ENCODE measurements at regions of chr3 and their contacts with region 1.

Region 1: GRCh38 chr3:73624821-73625665 is at the start of gene PDZRN3:
- DNase-seq: peak in 1 of 2 donors; percentile 79
- H3K4me3 ChIP-seq: peak within 1 kb of the TSS; percentile 82 to 91
- H3K27ac ChIP-seq: peak within 1 kb of the TSS; percentile 91 to 93
- H3K4me1 ChIP-seq: peaks cover 0 to 12% of the 10 kb centered on the region in 2 donors
- H3K27me3 ChIP-seq: no peaks in the 10 kb centered on the region
- CTCF ChIP-seq: no peak
- total RNA-seq, gene PDZRN3: 71.9 TPM

Region 2: DNA sequence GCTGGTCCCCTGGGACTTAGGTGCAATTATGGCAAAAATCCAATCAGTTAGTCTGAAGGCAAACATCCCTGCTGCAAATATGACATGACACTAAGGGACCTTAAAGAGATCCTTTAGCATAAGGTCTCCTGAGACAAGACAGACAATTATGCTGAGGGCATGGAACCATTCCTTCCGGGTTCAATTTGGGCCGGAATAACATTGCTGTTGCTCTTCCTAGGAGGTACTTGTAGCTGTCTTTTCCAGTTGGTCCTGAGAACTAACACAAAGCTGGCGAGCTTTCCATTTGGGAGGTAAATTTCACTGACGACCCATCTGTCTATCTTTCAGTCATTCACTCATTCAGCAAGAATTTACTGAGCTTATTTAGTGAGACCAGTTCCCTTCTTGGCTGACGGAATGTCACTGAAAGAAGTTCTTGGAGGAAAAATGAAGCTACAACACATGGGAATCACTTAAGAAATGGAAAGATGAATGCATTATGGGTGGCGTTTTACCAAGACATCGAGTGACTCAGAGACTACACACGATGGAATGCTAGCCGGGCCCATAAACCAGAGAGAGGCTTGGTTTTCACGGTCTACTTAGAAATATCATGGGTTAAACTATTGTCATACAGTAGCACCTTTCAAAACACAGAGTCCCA is 215.8 kb before region 1 on chr3:
- intact Hi-C with region 1: no loop called
- DNase-seq: no peak
- H3K4me3 ChIP-seq: no peak overlapping the region
- H3K27ac ChIP-seq: peak overlapping the region in 1 of 2 donors; percentile 15
- H3K4me1 ChIP-seq: peaks cover 6 to 26% of the 10 kb centered on the region in 2 donors
- H3K27me3 ChIP-seq: no peaks in the 10 kb centered on the region
- CTCF ChIP-seq: no peak

Region 3: DNA sequence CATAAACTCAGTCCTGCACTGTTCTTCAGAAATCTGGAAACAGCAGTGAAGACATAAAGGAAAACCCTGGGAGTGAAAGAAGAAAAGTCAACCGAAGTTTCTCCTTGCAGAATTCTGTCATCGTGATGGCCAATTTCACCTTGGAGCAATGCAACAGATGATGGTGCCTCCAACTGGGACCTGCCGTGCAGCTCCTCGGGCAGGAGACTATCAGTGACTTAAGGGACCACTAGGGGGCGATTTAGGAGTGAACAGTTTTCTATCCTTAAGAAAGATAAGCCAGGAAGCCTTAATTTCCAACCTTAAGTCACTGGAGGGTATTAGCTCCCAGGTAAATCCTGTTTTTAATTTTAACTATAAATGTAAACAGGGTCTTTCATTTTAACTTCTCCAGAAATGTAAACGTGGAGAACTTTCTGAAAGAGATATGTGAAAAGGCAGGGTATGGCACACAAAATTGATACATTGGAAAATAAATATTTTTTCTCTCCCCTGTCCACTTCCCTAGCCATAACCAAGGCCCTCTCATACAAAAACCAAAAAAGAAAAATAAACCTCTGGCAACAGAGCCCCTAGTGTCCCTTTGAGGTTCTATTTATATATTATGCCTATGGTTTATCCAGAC is 116.6 kb before region 1 on chr3:
- intact Hi-C with region 1: loop called (anchors 2 kb)
- DNase-seq: no peak
- H3K4me3 ChIP-seq: peak overlapping the region in 1 of 2 donors; percentile 13
- H3K27ac ChIP-seq: peak overlapping the region; percentile 73 to 89
- H3K4me1 ChIP-seq: peaks cover 8 to 62% of the 10 kb centered on the region in 2 donors
- H3K27me3 ChIP-seq: no peaks in the 10 kb centered on the region
- CTCF ChIP-seq: peak; percentile 56 to 73 (median 71)

Region 4: GRCh38 chr3:73580343-73580742 is 44.7 kb before region 1 on chr3:
- intact Hi-C with region 1: no loop called
- DNase-seq: no peak
- H3K4me3 ChIP-seq: no peak overlapping the region
- H3K27ac ChIP-seq: no peak overlapping the region
- H3K4me1 ChIP-seq: peaks cover 0 to 15% of the 10 kb centered on the region in 2 donors
- H3K27me3 ChIP-seq: no peaks in the 10 kb centered on the region
- CTCF ChIP-seq: no peak

Region 5: DNA sequence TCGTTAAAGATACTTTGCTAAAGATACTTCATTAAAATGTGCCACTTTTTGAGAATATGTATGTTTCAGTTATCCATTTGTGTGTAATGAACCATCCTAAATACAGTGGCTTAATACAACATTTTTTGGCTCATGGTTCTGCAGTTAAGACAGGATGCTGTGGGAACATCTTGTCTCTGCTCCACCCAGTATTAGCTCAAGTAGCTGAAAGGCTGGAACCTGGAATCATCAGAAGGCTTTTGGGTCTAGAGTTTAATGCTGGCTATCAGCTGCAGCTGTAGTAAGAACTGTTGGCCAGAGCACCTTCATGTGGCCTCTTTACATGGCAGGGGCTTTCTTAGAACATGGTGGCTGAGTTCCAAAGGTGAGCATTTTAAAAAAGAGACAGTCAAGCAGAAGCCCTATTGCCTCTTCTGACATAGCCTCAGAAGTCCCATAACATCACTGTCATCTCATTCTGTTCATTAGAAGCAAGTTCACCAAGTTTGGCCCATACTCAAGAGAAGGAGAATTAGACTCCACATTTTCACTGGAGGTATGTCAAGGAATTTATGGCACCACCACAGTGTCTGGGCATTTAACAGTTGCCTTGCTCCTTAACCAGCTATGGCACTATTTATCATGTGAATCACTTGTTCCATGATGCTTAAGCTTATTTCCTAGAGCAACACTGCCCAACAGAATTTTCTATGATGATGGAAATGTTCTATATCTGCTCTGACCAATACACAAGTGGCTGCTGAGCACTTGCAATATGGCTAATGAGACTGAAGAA is 70.1 kb after region 1 on chr3:
- intact Hi-C with region 1: loop called (anchors 5 kb)
- DNase-seq: no peak
- H3K4me3 ChIP-seq: no peak overlapping the region
- H3K27ac ChIP-seq: peak overlapping the region in 1 of 2 donors; percentile 38
- H3K4me1 ChIP-seq: peaks cover 0 to 7% of the 10 kb centered on the region in 2 donors
- H3K27me3 ChIP-seq: no peaks in the 10 kb centered on the region
- CTCF ChIP-seq: no peak

Region 6: DNA sequence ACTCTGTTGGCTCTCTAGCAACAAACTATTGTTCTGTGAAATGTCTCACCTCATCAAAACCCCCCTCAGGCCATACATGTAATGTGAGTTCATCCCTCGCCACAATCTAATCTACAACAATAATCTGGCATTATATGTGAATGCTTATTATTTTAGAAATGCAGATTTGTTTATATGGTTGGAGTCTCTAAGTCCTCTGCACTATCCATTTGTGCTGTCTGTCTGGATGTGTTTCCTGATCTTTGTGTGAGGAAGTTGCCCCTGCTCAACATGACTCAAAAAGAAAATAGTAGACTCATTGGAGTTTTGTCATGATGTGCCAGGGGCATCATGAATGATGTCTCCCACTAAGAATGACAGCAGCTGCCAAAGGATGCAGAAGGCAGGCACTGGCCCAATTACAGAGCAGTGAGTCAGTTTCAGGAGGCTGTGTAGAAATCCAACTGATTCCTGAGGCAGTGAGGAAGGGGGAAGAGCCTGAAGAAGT is 161.3 kb after region 1 on chr3:
- intact Hi-C with region 1: loop called (anchors 5 kb)
- DNase-seq: peak; percentile 63 to 93
- H3K4me3 ChIP-seq: no peak overlapping the region
- H3K27ac ChIP-seq: peak overlapping the region; percentile 69 to 76
- H3K4me1 ChIP-seq: peaks cover 0 to 21% of the 10 kb centered on the region in 2 donors
- H3K27me3 ChIP-seq: no peaks in the 10 kb centered on the region
- CTCF ChIP-seq: no peak

Region 7: DNA sequence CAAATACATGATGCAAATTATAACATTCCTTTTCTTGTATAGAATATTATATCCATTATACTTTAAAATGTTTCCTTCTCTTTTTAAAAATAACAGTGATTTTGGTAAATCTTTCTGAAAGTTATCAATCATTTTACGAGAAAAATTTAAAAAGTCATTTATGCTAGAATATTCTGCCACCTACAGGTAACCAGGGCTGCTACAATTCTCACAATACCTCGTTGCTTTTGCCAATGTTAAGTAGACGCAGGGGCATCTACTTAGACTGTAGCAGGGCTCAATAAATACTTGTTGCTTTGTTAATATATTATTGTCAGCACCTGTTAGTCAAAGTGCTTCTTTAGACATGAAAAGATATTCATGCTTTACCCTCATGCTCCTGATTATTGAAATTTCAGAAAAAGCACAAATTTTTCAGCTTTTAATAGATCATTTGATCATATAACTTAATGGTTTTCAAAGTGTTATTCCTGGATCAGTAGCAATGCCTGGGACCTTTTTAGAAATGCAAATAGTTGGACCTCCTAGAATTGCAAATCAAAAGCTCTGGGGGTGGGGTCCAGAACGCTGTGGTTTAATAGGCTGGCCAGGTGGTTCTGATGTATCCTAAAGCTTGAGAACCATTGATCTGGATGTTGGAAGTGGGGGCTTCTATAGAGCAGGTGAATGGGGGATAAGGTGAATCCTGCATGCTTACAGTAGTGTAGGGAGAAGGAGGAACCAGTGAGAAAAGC is 223.3 kb after region 1 on chr3:
- intact Hi-C with region 1: loop called (anchors 2 kb)
- DNase-seq: no peak
- H3K4me3 ChIP-seq: no peak overlapping the region
- H3K27ac ChIP-seq: no peak overlapping the region
- H3K4me1 ChIP-seq: peaks cover 0 to 2% of the 10 kb centered on the region in 2 donors
- H3K27me3 ChIP-seq: no peaks in the 10 kb centered on the region
- CTCF ChIP-seq: peak; percentile 37 to 77 (median 63)

Measured in ascending aorta (tissue), 2 donors.